ENCODE measurements at regions of chr7 and their contacts with region 1.

Region 1: DNA sequence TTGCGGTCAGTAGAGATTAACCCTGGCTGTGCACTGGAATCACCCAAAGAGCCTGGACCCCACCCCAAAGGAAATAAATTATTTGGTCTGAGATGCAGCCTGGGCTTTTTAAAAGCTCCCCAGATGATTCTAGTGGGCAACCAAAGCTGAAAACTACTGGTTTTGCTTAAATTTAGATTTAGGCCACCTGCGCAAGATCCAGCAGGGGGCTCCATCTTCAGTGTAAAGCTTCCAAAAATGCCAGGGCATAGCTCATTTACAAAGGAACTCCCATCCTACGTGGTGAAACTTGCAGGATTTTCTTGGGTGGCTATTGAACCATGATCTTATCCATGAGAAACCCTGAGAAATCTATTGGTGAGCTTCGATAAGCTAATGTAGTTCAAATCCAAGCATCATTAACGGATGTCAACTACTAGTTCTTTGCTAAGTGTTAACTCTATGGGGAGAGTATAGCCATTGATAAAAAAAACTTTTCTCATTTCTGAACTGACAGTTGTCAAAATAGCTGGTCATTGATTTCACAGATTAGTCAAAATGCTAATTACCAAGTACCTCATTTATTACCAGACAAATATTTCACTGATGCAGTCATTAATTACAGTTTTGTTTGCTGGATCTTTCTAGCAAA is 315.3 kb downstream of the LHFPL3 start:
- DNase-seq: peak; percentile 15 to 35 (median 26)
- ATAC-seq: peak; percentile 57
- H3K4me3 ChIP-seq: no peak overlapping the region
- H3K27ac ChIP-seq: no peak overlapping the region
- H3K4me1 ChIP-seq: no peaks in the 10 kb centered on the region
- H3K27me3 ChIP-seq: peaks cover 3 to 7% of the 10 kb centered on the region in 2 experiments; a peak in 3 of 5 replicates
- CTCF ChIP-seq: peak; percentile 57 to 68 (median 66)
- EP300 ChIP-seq: no peak
- POLR2A ChIP-seq: no peak
- RAD21 ChIP-seq: peak; percentile 51 to 59; a peak in 3 of 4 replicates

Region 2: GRCh38 chr7:104767826-104768536 is 124.3 kb after region 1 on chr7:
- CTCF ChIA-PET with region 1: no interaction called
- POLR2A ChIA-PET with region 1: no interaction called
- in situ Hi-C with region 1: no loop called
- intact Hi-C with region 1: loop called (anchors 10 kb)
- DNase-seq: no peak
- ATAC-seq: no peak
- H3K4me3 ChIP-seq: no peak overlapping the region
- H3K27ac ChIP-seq: no peak overlapping the region
- H3K4me1 ChIP-seq: no peaks in the 10 kb centered on the region
- H3K27me3 ChIP-seq: peaks cover 0 to 10% of the 10 kb centered on the region in 2 experiments; a peak in 3 of 5 replicates
- CTCF ChIP-seq: no peak
- EP300 ChIP-seq: no peak
- POLR2A ChIP-seq: no peak
- RAD21 ChIP-seq: no peak

Region 3: DNA sequence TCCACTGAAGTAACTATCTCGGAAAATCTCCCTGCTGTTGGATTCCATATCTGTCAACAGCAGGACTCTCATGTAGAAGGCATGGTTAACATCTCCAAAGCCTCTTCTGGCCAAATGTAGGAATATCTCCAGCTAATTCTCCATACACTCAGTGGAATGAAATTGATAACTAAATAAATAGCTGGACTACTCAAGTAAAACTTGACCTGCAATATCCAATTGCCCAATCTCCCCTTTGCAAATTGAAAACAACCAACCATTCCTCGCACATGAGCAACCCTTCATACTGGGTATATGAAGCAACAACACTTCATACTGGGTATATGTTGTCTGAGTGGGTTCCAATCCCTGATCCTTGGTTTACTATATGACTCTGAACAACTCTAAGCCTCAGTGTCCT is 264.9 kb after region 1 on chr7:
- CTCF ChIA-PET with region 1: no interaction called
- POLR2A ChIA-PET with region 1: no interaction called
- in situ Hi-C with region 1: loop called (anchors 5 kb)
- intact Hi-C with region 1: no loop called
- DNase-seq: no peak
- ATAC-seq: peak; percentile 25; the same call in 1 of the 3 replicates
- H3K4me3 ChIP-seq: no peak overlapping the region
- H3K27ac ChIP-seq: no peak overlapping the region
- H3K4me1 ChIP-seq: no peaks in the 10 kb centered on the region; a peak in 1 of 5 replicates
- H3K27me3 ChIP-seq: peaks cover 8 to 19% of the 10 kb centered on the region in 2 experiments; a peak in 4 of 5 replicates
- CTCF ChIP-seq: no peak
- EP300 ChIP-seq: no peak
- POLR2A ChIP-seq: no peak
- RAD21 ChIP-seq: no peak

Measured in K562 (cell line).